GM23248 (cell line): ENCODE measurements at regions of chr11 and their contacts with region 1.

Region 1: DNA sequence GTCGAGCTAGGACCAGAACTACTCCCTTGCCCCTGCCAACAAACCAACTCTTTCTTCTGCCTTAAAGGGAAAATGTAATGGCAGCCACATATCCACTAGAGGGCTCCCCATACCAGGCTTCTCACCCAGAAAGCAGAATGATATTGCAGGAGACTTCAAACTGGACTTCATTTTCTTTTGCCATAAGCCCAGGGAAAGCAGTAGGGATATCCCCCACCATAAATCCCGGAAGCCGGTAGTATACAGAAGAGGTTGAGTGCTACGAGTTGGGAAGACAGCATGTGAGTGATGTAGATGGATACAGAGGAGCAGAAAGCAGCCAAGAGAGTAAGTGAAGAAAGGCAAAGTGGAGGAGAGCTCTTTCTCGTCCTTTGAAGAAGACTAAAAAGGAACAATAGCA is 12.1 kb downstream of the PLAAT5 start:
- DNase-seq: peak; percentile 78
- H3K4me3 ChIP-seq: no peak overlapping the region
- H3K27ac ChIP-seq: no peak overlapping the region
- H3K4me1 ChIP-seq: no peaks in the 10 kb centered on the region
- H3K27me3 ChIP-seq: peaks cover 9% of the 10 kb centered on the region

Region 2: DNA sequence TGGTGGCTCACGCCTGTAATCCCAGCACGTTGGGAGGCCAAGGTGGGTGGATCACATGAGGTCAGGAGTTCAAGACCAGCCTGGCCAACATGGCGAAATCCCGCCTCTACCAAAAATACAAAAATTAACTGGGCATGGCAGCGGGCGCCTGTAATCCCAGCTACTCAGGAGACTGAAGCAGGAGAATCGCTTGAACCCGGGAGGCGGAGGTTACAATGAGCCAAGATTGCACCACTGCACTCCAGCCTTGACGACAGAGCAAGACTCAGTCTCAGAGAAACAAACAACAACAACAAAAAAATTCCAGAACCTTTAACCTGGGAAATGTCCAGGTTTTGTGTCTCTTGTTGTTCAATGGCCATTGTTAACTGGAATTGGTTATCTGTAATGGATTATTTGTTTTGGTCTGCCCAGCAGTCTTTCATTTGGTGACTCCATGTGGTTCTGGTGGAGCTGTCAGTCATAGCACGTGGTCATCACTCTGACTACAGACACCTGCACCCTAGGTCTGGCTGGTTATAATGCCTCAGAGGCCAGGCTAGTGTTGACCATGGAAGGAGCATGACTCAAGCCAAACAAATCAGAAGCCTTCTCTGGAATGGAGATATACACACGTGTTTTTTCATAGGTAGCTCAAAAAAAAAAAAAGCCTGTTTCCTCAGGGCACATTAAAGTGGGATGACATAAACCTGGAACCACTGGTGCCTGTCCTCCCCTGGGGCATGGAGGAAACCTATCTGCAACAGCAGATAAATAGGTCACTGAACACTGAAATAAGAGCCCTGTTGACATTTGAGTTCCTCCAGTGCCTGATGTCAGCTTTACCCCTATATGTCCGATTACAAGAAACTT is 143.3 kb after region 1 on chr11:
- in situ Hi-C with region 1: loop called (anchors 5 kb)
- DNase-seq: no peak
- H3K4me3 ChIP-seq: no peak overlapping the region
- H3K27ac ChIP-seq: no peak overlapping the region
- H3K4me1 ChIP-seq: no peaks in the 10 kb centered on the region
- H3K27me3 ChIP-seq: no peaks in the 10 kb centered on the region

Region 3: DNA sequence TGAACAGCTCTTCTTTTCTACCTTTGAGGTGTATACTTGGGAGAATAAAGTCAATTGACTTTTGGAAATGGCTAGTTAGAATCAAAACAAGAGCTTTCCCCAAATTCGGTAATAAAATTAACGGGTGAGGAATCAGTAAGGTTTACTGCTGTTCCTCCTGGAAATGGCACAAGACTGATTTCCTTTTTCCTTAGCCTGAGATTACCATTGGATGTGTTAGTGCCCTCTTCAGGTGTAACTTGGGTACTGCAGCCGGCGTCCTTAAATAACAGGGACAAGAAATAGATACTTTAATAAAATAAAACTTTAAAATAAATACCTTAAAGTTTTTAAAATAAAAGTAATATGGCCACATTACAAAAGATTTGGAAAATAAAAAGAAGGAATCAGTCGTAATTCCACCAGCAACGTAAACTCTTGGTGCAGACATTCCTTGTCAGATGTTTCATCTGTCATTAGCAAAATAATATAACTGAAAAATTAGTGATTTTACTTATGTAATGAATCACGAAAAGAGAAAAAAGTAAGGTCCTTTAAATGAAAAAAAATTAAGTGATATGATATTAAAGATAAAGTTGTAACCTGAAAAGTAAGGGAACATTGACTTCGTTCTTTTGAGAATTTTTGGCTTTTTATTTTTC is 259.9 kb after region 1 on chr11:
- in situ Hi-C with region 1: loop called (anchors 25 kb)
- DNase-seq: peak; percentile 75
- H3K4me3 ChIP-seq: no peak overlapping the region
- H3K27ac ChIP-seq: no peak overlapping the region
- H3K4me1 ChIP-seq: peaks cover 7% of the 10 kb centered on the region; the same call in 1 of the 2 replicates
- H3K27me3 ChIP-seq: no peaks in the 10 kb centered on the region

Region 4: DNA sequence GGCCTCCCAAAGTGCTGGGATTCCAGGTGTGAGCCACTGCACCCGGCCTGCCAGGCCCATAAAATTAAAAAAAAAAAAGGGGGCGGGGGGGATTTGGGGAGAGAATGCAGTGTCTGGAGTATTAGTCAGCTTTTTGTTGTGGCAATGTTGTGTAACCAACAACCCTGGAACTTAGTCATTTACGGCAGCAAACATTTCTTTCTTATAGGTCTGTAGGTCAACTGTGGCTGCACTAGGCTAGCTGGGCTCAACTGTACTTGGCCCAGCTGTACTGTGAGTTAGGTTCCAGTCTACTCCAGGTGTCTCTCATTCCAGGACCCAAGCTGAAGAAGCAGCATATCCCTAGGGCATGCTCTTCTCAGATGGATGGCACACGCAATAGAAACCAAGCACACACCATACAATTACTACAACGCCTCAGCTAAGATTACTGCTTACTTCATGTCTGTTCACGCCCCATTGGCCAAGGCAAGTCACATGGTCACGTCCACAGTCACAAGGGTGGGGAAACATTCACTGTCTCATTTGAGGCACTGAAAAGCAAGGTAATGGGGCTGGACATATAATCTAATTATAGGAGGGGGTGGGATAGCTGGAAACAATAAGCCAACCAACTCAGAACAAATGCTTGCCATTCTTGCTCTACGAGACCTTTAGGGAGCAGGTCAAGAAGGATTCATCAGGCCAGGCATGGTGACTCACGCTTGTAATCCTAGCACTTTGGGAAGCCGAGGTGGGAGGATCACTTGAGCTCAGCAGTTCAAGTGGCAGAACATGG is 323.9 kb after region 1 on chr11:
- in situ Hi-C with region 1: no loop called
- DNase-seq: peak; percentile 76
- H3K4me3 ChIP-seq: no peak overlapping the region
- H3K27ac ChIP-seq: peak overlapping the region; percentile 27
- H3K4me1 ChIP-seq: peaks cover 4% of the 10 kb centered on the region; the same call in 1 of the 2 replicates
- H3K27me3 ChIP-seq: no peaks in the 10 kb centered on the region